OCI-LY7 (cell line): ENCODE measurements at regions of chr1 and their contacts with region 1.

Region 1: DNA sequence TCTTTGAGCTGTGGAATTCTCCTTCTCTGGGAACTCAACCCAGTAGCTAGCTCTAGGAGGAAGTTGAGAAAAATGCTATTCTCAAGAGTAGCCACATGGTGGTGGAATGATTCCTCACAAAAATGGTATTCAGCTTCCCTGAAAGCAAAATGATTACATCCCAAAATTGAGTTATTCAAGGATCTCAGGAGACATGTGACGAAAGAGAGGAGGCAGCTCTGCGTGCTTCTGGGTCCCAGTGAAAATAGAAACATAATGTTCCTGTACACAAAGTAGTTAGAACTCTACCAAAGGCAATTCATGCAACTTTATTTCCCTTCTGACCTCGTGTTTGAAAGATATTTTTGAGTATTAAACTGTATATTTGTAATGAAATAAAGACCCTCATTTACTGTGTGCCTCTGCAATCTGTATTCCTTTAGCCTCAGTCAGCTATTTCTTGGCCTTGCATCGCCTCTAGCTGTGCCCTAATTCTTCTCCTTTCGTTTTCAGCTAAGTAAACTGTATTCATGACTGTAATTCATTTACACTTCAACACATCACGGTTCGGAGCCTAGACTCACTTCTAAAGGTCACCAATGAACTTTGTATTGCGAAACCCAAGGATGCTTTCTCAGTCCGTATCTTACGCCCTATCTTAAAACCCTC is 167.3 kb downstream of the FASLG start:
- DNase-seq: peak; percentile 53
- H3K4me3 ChIP-seq: no peak overlapping the region
- H3K27ac ChIP-seq: no peak overlapping the region
- H3K4me1 ChIP-seq: peaks cover 15% of the 10 kb centered on the region
- CTCF ChIP-seq: peak; percentile 86

Region 2: DNA sequence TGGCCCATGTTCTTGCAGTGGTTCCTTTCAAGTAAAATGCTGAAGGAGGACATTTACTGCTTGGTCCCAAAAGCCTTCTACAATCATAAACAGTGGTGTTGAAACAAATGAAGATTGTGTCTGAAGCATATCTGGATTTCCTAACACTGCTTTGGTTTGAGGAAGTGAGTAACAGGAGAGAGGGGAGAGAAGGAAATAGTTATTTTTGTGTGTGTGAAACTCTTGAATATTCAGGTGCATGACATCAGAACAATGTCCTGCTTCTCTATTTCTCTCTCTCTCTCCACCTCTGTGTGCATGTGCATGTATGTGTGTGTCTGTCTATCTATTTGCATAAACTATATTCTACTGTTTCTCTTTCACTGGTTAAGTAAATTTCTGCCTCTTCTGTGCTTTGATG is 285.9 kb after region 1 on chr1:
- CTCF ChIA-PET with region 1: no interaction called
- POLR2A ChIA-PET with region 1: no interaction called
- intact Hi-C with region 1: loop called (anchors 10 kb)
- DNase-seq: peak; percentile 78
- H3K4me3 ChIP-seq: no peak overlapping the region
- H3K27ac ChIP-seq: peak overlapping the region; percentile 29
- H3K4me1 ChIP-seq: peaks cover 28% of the 10 kb centered on the region
- CTCF ChIP-seq: no peak

Region 3: GRCh38 chr1:173202430-173203145 is 376.4 kb after region 1 on chr1:
- CTCF ChIA-PET with region 1: interaction called, 3 read pairs
- POLR2A ChIA-PET with region 1: interaction called, 5 read pairs
- intact Hi-C with region 1: loop called (anchors 1 kb)
- DNase-seq: peak; percentile 63
- H3K4me3 ChIP-seq: no peak overlapping the region
- H3K27ac ChIP-seq: no peak overlapping the region
- H3K4me1 ChIP-seq: no peaks in the 10 kb centered on the region
- CTCF ChIP-seq: peak; percentile 84